ENCODE measurements at regions of chr20 and their contacts with region 1.

Region 1: DNA sequence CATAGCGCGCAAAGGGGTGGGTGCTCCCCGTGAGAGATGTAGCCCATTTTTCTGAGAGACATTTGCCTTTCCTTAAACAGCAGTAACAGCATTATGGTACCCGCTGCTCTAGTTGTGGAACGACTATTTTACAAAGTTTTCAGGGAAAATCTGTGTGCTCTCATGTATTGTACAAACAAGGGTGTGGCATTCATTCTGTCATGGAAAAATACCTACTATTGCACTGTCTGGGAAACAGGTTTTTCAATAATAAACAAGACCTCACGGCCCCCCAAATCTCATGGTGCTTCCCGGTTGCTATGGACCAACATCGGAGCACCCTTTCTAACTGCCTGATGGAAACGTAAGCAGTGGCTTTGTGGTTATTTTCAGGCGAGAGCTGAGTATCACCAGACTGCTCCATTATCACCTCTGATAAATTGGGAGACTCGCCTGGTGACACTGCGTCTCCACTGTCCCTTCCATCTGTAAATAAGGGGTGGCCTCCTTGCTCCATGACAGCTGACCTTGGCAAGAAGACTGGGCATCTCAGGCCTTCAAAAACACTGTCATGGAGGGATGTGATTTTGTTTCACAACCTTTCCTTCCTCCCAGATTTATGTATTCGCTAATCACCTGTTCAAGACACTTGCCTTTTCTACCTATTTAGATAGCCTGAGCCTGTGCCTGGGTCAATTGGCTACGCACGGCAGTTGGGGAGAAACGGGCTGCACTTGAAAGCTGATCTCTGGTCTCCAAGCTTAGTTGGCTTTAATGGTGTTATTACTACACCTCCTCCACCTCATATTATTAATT is 17.9 kb upstream of the CDH4 start:
- DNase-seq: no peak
- H3K4me3 ChIP-seq: no peak overlapping the region
- H3K27ac ChIP-seq: no peak overlapping the region
- H3K4me1 ChIP-seq: no peaks in the 10 kb centered on the region
- H3K27me3 ChIP-seq: no peaks in the 10 kb centered on the region
- CTCF ChIP-seq: no peak
- EP300 ChIP-seq: no peak
- RAD21 ChIP-seq: no peak

Region 2: DNA sequence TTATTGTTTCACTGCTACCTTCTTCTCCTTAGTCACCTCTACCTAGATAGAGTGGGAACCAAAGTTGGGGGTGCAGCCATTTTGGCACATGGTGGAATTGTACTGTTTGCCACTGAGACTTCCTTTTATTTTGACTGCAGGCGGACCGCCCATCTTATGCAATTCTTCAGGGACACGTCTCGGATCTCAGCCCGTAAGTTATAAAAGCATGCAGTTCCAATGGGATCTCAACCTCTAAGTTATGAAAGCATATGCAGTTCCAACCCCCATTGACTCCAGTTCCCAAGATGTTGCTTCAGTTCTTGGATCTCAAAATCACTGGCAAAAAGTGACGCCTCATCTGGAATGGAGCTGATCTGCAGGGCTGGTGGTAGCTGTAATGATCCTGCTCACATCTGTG is 23.3 kb before region 1 on chr20:
- CTCF ChIA-PET with region 1: interaction called, 15 read pairs
- POLR2A ChIA-PET with region 1: no interaction called
- DNase-seq: no peak
- H3K4me3 ChIP-seq: no peak overlapping the region
- H3K27ac ChIP-seq: no peak overlapping the region
- H3K4me1 ChIP-seq: no peaks in the 10 kb centered on the region
- H3K27me3 ChIP-seq: no peaks in the 10 kb centered on the region
- CTCF ChIP-seq: no peak
- EP300 ChIP-seq: no peak
- RAD21 ChIP-seq: no peak

Region 3: DNA sequence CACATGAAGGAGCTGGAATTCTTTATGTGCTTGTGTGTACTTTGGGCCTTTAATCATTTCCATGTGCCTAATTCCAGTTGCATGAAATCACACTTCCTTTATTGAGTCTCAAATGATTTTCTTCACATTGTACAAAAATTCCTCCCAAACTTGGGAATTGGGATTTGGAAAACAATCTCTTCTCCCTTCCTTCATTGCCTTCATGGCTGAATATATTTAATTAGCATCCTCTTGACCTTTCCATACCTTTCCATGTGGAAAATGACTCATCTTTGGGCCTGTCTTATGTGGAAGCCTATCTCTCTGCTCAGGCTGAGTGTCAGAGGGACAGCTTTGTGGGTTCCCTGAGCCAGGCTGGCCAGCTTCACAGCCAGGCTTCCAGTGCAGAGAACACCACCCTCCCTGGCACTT is 15.2 kb before region 1 on chr20:
- CTCF ChIA-PET with region 1: interaction called, 26 read pairs
- POLR2A ChIA-PET with region 1: no interaction called
- DNase-seq: no peak
- H3K4me3 ChIP-seq: no peak overlapping the region
- H3K27ac ChIP-seq: no peak overlapping the region
- H3K4me1 ChIP-seq: no peaks in the 10 kb centered on the region; a peak in 1 of 4 replicates
- H3K27me3 ChIP-seq: no peaks in the 10 kb centered on the region
- CTCF ChIP-seq: no peak
- EP300 ChIP-seq: no peak
- RAD21 ChIP-seq: no peak

Region 4: GRCh38 chr20:61253264-61253639 is 19.0 kb after region 1 on chr20:
- CTCF ChIA-PET with region 1: interaction called, 22 read pairs
- POLR2A ChIA-PET with region 1: no interaction called
- DNase-seq: peak; percentile 69
- H3K4me3 ChIP-seq: no peak overlapping the region
- H3K27ac ChIP-seq: no peak overlapping the region
- H3K4me1 ChIP-seq: no peaks in the 10 kb centered on the region; a peak in 1 of 4 replicates
- H3K27me3 ChIP-seq: no peaks in the 10 kb centered on the region
- CTCF ChIP-seq: no peak
- EP300 ChIP-seq: no peak
- RAD21 ChIP-seq: no peak

Measured in SK-N-SH (cell line).